Ascending aorta (tissue), 2 donors: ENCODE measurements at regions of chr1 and their contacts with region 1.

Region 1: DNA sequence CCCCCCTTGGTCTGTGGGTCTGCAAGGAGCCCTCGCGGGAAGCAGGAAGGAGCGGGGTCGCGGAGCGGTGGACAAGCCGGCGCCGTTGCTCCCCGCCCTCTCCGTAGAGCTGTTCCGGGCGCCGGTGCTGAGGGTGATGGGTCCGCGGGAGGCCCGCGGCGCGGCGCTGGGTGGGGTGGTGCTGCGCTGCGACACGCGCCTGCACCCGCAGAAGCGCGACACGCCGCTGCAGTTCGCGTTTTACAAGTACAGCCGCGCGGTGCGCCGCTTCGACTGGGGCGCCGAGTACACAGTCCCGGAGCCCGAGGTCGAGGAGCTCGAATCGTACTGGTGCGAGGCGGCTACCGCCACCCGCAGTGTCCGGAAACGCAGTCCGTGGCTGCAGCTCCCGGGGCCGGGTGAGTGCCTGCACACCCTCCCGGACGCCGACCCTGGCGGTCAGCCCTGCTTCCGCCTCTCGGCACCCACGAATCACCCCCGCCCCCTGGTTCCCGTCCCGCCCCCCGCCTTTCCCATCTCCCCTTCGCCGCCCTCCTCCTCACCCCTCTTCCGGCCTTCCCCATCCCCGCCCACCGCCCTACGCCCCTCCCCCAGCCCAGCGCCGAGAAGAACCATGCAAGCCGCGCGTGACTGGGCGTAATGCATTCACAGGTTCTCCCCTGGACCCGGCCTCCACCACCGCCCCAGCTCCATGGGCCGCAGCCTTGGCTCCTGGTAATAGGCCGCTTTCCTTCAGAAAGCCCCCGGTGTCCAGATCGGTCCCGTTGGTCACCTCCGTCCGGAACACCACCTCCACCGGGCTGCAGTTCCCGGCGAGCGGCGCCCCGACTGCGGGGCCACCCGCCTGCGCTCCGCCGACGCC is 5.5 kb downstream of the FCRLB start:
- DNase-seq: peak; percentile 52 to 91
- H3K4me3 ChIP-seq: peak overlapping the region; percentile 90 to 92
- H3K27ac ChIP-seq: peak overlapping the region; percentile 77 to 81
- H3K4me1 ChIP-seq: peaks cover 2 to 6% of the 10 kb centered on the region in 2 donors
- H3K27me3 ChIP-seq: no peaks in the 10 kb centered on the region
- CTCF ChIP-seq: no peak

Region 2: DNA sequence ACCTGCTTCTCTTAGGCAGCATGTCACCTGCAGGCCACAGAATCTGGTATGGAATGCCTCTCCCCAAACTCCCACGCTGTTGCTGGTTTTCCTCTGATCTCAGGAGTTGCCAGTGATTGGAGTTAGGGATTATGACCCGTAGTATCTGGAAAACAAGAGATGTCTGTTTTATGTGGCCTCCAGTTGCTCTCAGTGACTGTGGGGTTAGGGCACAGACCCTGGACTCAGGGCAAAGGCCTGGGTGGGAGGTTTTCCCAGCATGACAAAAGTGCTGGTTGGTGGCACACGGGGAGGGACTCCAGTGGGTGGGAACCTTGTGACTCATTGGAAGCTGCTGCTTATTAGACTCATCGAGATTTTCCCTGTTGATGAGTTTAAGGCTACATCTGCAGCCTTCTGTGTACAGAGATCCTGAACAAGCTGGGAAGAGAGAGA is 488.8 kb before region 1 on chr1 and contains the start of gene NR1I3:
- intact Hi-C with region 1: no loop called
- DNase-seq: no peak
- H3K4me3 ChIP-seq: no peak within 1 kb of the TSS
- H3K27ac ChIP-seq: no peak within 1 kb of the TSS
- H3K4me1 ChIP-seq: no peaks in the 10 kb centered on the region
- H3K27me3 ChIP-seq: no peaks in the 10 kb centered on the region
- CTCF ChIP-seq: no peak
- total RNA-seq, gene NR1I3: 0.21 TPM

Region 3: GRCh38 chr1:161531986-161532643 is 194.7 kb before region 1 on chr1:
- intact Hi-C with region 1: loop called (anchors 5 kb)
- DNase-seq: no peak
- H3K4me3 ChIP-seq: peak overlapping the region in 1 of 2 donors; percentile 45
- H3K27ac ChIP-seq: peak overlapping the region; percentile 91 to 97
- H3K4me1 ChIP-seq: peaks cover 0 to 5% of the 10 kb centered on the region in 2 donors
- H3K27me3 ChIP-seq: no peaks in the 10 kb centered on the region
- CTCF ChIP-seq: no peak

Region 4: GRCh38 chr1:161706482-161707347 is 20.1 kb before region 1 on chr1 and contains the start of gene FCRLA:
- intact Hi-C with region 1: loop called (anchors 1 kb)
- DNase-seq: no peak
- H3K4me3 ChIP-seq: no peak within 1 kb of the TSS
- H3K27ac ChIP-seq: peak within 1 kb of the TSS; percentile 58 to 81
- H3K4me1 ChIP-seq: peaks cover 0 to 4% of the 10 kb centered on the region in 2 donors
- H3K27me3 ChIP-seq: no peaks in the 10 kb centered on the region
- CTCF ChIP-seq: no peak
- total RNA-seq, gene FCRLA: not detected

Region 5: GRCh38 chr1:161766102-161766981 is 39.5 kb after region 1 on chr1 and contains the start of gene ATF6:
- intact Hi-C with region 1: loop called (anchors 1 kb)
- DNase-seq: peak; percentile 75 to 96
- H3K4me3 ChIP-seq: peak within 1 kb of the TSS; percentile 55 to 93
- H3K27ac ChIP-seq: peak within 1 kb of the TSS; percentile 77 to 91
- H3K4me1 ChIP-seq: peaks cover 0 to 16% of the 10 kb centered on the region in 2 donors
- H3K27me3 ChIP-seq: no peaks in the 10 kb centered on the region
- CTCF ChIP-seq: no peak
- total RNA-seq, gene ATF6: 12.3 TPM